H1 (cell line): ENCODE measurements at regions of chr1 and their contacts with region 1.

Region 1: DNA sequence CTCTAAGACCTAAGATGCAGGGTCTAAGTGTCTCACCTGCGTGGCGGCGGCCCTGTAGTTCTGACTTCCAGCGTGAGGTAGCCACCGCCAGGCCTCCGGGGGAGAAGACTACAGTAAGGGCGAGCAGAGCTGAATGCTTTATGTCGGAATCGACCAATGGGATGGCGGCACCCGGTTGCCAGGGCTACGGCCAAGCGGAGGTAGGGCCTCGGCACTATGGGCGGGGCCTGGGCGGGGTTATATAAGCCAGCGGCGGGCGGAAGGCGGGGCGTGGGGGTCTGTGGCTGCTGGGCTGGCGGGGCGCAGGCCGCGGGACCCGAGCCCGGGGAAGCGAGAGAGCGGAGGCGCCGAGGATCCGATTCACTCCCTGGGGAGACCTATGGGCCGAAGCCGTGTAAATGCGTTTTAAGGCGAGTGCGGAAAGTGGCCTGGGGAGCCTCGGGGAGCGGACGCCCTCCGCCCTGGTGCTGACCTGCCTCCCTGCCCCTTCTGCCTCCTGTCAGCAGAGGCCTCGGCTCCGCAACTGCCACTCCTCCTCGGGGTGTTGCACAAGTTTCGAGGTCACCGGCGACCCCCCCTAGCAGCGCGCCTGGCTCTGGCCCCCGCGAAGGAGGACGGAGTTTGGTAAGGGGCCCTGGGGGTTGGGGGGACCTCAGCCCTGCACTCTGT is at the start of gene AZIN2:
- DNase-seq: peak; percentile 80 to 100
- H3K4me3 ChIP-seq: peak within 1 kb of the TSS; percentile 43 to 63 (median 58)
- H3K27ac ChIP-seq: no peak within 1 kb of the TSS
- H3K4me1 ChIP-seq: peaks cover 0 to 5% (median 4%) of the 10 kb centered on the region in 4 experiments; a peak in 4 of 7 replicates
- H3K27me3 ChIP-seq: peaks cover 10 to 48% (median 37%) of the 10 kb centered on the region in 4 experiments
- CTCF ChIP-seq: no peak
- EP300 ChIP-seq: no peak
- POLR2A ChIP-seq: peak in 1 of 2 experiments; percentile 64; a peak in 2 of 3 replicates
- RAD21 ChIP-seq: peak in 1 of 2 experiments; percentile 15; a peak in 1 of 4 replicates
- total RNA-seq, gene AZIN2: 0.21 and 0.22 TPM in 2 replicates

Region 2: DNA sequence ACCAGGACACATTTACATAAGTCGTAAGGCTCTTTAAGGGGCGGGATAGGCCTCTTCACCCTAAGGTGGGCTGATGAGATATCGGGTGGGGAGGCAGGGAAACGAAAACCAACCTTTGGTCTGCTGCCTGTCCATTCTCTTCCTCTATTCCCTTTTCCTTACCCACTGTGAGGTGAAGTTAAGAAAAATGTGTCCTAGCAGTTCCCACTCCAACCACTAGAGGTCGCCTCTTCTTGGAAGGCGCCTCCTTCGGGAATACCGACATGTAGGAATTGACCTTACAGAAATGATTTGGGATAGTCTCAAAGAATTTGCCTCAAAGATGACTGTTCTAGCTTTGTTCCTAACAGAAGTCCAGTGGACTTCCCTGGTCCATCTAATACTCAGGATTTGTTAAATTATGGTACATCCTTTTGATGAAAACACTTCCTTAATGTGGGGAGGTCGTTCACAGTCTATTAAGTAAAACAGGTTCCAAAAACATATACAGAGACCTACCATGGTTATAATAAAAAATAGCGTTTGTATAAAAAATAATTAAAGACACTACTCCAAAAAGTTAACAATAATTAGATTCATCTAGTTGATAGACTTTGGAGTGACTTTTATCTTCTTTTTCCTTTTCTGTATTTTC is 14.1 kb after region 1 on chr1:
- CTCF ChIA-PET with region 1: interaction called, 14 read pairs
- POLR2A ChIA-PET with region 1: interaction called, 4 read pairs
- DNase-seq: peak; percentile 29 to 93
- H3K4me3 ChIP-seq: no peak overlapping the region
- H3K27ac ChIP-seq: no peak overlapping the region
- H3K4me1 ChIP-seq: peaks cover 0 to 3% (median 1%) of the 10 kb centered on the region in 4 experiments; a peak in 3 of 7 replicates
- H3K27me3 ChIP-seq: no peaks in the 10 kb centered on the region
- CTCF ChIP-seq: peak; percentile 55 to 94 (median 91)
- EP300 ChIP-seq: no peak
- POLR2A ChIP-seq: no peak
- RAD21 ChIP-seq: peak; percentile 52 to 68

Region 3: GRCh38 chr1:33137800-33138199 is 56.8 kb after region 1 on chr1:
- CTCF ChIA-PET with region 1: no interaction called
- POLR2A ChIA-PET with region 1: no interaction called
- DNase-seq: peak in 1 of 2 experiments; percentile 85
- H3K4me3 ChIP-seq: no peak overlapping the region
- H3K27ac ChIP-seq: no peak overlapping the region
- H3K4me1 ChIP-seq: peaks cover 6 to 20% (median 11%) of the 10 kb centered on the region in 4 experiments
- H3K27me3 ChIP-seq: no peaks in the 10 kb centered on the region; a peak in 1 of 7 replicates
- CTCF ChIP-seq: peak; percentile 74 to 89 (median 86)
- EP300 ChIP-seq: no peak
- POLR2A ChIP-seq: no peak
- RAD21 ChIP-seq: peak; percentile 73 to 80

Region 4: GRCh38 chr1:33188572-33189275 is 107.7 kb after region 1 on chr1:
- CTCF ChIA-PET with region 1: no interaction called
- POLR2A ChIA-PET with region 1: no interaction called
- DNase-seq: no peak
- H3K4me3 ChIP-seq: no peak overlapping the region
- H3K27ac ChIP-seq: no peak overlapping the region
- H3K4me1 ChIP-seq: peaks cover 0 to under 1% (median 0%) of the 10 kb centered on the region in 4 experiments; a peak in 1 of 7 replicates
- H3K27me3 ChIP-seq: peaks cover 0 to 2% (median under 1%) of the 10 kb centered on the region in 4 experiments; a peak in 1 of 7 replicates
- CTCF ChIP-seq: no peak
- EP300 ChIP-seq: no peak
- POLR2A ChIP-seq: no peak
- RAD21 ChIP-seq: no peak

Region 5: DNA sequence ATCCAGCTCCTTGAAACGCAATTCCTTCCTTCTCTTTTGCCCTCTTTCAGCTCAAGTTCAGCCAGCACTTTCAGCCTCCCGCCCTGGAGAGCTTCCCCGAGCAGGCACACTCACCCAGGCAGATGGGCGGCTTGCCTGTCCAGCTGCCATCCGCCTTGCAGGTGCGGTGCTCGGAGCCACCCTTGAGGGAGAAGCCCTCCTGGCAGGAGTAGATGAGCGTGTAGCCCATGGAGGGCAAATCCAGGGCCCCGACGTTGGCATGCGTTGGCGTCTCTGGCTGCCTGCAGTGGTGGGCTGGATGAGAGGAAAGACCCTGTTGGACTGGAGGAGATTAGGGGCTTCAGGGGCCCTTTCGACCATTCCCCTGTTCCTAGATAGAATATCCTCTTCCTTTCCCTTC is 451.9 kb after region 1 on chr1:
- CTCF ChIA-PET with region 1: no interaction called
- POLR2A ChIA-PET with region 1: no interaction called
- DNase-seq: no peak
- H3K4me3 ChIP-seq: no peak overlapping the region
- H3K27ac ChIP-seq: no peak overlapping the region
- H3K4me1 ChIP-seq: no peaks in the 10 kb centered on the region
- H3K27me3 ChIP-seq: no peaks in the 10 kb centered on the region
- CTCF ChIP-seq: no peak
- EP300 ChIP-seq: no peak
- POLR2A ChIP-seq: no peak
- RAD21 ChIP-seq: no peak